Ascending aorta (tissue), 2 donors: ENCODE measurements at regions of chr2 and their contacts with region 1.

Region 1: GRCh38 chr2:25878361-25879132 is at the start of gene ASXL2:
- DNase-seq: peak; percentile 92 to 98
- H3K4me3 ChIP-seq: peak within 1 kb of the TSS; percentile 70 to 77
- H3K27ac ChIP-seq: peak within 1 kb of the TSS; percentile 81 to 90
- H3K4me1 ChIP-seq: peaks cover 0 to 10% of the 10 kb centered on the region in 2 donors
- H3K27me3 ChIP-seq: no peaks in the 10 kb centered on the region
- CTCF ChIP-seq: no peak
- total RNA-seq, gene ASXL2: 8.7 TPM

Region 2: GRCh38 chr2:25673300-25674076 is 205.1 kb before region 1 on chr2 and contains the start of gene DTNB:
- intact Hi-C with region 1: loop called (anchors 2 kb)
- DNase-seq: peak; percentile 59 to 92
- H3K4me3 ChIP-seq: peak within 1 kb of the TSS; percentile 77 to 85
- H3K27ac ChIP-seq: peak within 1 kb of the TSS; percentile 83 to 84
- H3K4me1 ChIP-seq: peaks cover 8 to 11% of the 10 kb centered on the region in 2 donors
- H3K27me3 ChIP-seq: no peaks in the 10 kb centered on the region
- CTCF ChIP-seq: no peak
- total RNA-seq, gene DTNB: 22.7 TPM

Region 3: DNA sequence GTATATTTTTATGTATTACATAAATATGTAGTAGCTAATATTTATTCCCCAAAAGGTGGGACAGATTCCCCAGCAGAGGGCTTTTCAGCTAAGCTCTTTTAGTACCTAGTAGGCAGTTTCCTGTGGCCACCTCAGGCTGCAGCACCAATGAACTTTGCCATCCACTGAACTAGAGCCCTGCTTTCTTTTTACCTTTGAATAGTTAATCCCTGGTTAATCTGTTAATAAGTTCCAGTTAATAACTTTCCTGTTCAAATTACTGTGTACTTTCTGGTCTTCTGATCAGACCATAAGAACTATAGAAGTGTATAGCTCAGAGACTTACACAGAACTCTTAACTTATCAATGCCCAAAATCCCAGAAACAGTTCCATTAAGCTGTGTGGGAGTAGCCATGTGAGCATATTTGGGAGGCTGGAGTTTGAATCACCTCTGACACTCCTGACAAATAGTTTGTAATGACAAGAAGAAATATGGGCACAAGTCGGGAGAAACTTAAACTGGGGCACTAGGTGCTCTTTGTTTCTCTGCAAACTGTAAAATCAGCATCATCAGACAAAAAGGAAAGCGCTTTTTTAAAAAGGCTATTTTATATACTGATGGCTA is 40.3 kb before region 1 on chr2:
- intact Hi-C with region 1: no loop called
- DNase-seq: no peak
- H3K4me3 ChIP-seq: no peak overlapping the region
- H3K27ac ChIP-seq: no peak overlapping the region
- H3K4me1 ChIP-seq: no peaks in the 10 kb centered on the region
- H3K27me3 ChIP-seq: no peaks in the 10 kb centered on the region
- CTCF ChIP-seq: no peak

Region 4: DNA sequence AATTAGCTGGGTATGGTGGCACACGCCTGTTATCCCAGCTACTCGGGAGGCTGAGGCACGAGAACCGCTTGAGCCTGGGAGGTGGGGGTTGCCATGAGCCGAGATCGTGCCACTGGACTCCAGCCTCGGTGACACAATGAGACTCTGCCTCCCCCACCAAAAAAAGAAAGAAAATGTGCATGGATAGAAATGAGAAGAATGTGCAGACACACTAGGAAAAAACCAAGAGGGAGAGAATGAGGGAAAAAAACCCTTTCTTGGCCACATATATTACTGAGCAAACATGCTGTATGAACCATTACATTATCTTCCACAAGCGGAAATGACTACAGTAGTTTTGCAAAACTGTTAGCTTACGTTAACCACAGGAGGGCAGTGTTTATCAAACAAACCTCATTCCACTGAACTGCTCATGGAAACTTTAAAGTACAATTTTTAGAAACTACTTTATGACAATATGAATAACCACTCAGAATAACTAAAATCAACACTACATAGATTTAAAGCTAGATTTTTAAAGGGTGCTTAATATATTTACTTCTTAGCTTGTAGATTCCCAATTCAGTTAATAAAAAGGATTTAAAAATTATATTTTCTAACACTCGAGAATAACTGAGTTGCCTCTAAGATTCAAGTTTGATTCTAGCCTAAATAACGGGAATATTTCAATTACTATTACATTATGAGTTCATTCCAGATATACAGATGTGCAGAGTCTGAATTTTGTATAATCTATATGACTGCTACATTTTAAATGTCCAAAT is 26.6 kb before region 1 on chr2:
- intact Hi-C with region 1: loop called (anchors 2 kb)
- DNase-seq: no peak
- H3K4me3 ChIP-seq: peak overlapping the region in 1 of 2 donors; percentile 39
- H3K27ac ChIP-seq: peak overlapping the region; percentile 7 to 46
- H3K4me1 ChIP-seq: peaks cover 0 to 11% of the 10 kb centered on the region in 2 donors
- H3K27me3 ChIP-seq: no peaks in the 10 kb centered on the region
- CTCF ChIP-seq: peak; percentile 63 to 65 (median 65)

Region 5: GRCh38 chr2:26345545-26346453 is 467.3 kb after region 1 on chr2 and contains the start of gene SELENOI:
- intact Hi-C with region 1: loop called (anchors 2 kb)
- DNase-seq: peak; percentile 96 to 99
- H3K4me3 ChIP-seq: peak within 1 kb of the TSS; percentile 74 to 94
- H3K27ac ChIP-seq: peak within 1 kb of the TSS; percentile 90 to 94
- H3K4me1 ChIP-seq: peaks cover 6 to 20% of the 10 kb centered on the region in 2 donors
- H3K27me3 ChIP-seq: no peaks in the 10 kb centered on the region
- CTCF ChIP-seq: no peak
- total RNA-seq, gene SELENOI: 2.2 TPM

Region 6: DNA sequence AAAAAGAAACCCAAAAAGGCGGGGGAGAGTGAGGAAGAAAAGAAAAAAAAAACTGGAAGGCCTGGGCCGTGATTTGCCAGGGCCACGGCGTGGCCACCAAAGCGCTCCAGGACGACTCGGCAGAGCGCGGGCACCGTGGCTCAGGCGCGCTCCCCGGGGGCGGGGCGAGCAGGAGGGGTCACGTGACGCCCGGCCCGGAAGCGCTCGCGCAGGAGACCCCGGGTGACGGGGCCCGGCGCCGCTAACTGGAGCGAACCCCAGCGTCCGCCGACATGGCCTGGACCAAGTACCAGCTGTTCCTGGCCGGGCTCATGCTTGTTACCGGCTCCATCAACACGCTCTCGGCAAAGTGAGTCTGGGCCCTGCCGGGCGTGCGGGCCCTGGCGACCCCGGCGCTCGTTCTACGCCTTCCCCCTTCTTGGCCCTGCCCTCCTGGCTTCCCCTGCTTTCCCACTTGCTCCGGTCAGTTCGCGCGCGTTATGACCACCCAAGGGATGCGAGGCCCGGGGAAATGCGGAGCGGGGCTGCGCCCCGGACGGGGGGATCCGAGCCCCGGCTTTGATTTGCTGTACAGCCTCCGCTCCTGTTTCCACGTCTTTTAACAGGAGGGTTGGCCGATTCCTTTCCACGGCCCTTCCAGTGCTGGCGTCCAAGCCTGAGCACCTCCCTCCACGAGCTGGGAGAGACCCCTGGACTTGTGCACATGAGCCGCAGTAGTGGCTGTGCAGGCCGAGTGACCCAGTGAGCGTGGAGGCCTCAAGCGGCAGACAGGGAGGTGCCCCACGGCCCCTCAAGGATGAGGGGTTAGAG is 885.7 kb after region 1 on chr2 and contains the start of gene SLC35F6:
- intact Hi-C with region 1: loop called (anchors 10 kb)
- DNase-seq: peak in 1 of 2 donors; percentile 89
- H3K4me3 ChIP-seq: peak within 1 kb of the TSS; percentile 75 to 96
- H3K27ac ChIP-seq: peak within 1 kb of the TSS; percentile 86 to 97
- H3K4me1 ChIP-seq: peaks cover 7 to 31% of the 10 kb centered on the region in 2 donors
- H3K27me3 ChIP-seq: no peaks in the 10 kb centered on the region
- CTCF ChIP-seq: no peak
- total RNA-seq, gene SLC35F6: 43.4 TPM